Prostate gland (tissue), 2 donors: ENCODE measurements at regions of chr17 and their contacts with region 1.

Region 1: DNA sequence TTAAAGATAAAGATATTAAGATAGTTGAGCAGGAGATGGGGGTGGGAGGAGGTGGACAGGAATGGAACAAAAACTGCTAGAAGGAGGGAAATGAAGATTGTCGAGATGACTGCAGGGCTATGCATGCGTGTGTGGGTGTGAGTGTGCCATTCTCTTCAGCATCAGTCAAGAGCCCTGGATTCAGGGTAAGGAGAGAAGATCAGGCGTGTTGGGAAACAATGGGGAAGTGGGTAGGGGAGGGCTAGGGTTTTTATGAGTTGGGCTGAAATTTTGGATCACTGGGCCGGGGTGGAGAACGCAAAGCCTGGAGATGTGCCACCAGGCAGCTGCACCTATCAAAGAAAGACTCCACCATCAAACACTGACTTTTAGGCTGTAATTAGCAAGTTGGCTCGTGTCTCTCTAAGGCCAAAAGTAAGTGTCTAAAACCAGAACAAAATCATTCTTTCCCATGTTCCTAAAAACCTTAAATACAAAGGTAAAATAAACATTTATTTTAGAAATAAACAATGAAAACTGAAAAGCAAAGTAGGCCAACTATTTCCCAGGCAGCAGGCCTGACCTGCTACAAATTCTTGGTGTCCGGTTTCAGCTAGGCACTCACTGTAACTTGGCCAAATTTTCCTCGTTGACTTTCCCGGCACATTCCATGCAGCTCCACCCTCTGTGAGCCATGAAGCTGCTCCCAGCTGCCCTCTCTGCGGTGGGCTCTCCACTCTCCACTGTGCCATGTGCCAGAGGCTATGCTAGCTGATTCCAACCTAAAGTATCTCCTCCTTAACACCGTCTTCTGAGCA is 4.2 kb downstream of the CDRT4 start:
- DNase-seq: no peak
- H3K4me3 ChIP-seq: no peak overlapping the region
- H3K27ac ChIP-seq: peak overlapping the region in 1 of 2 donors; percentile 23
- H3K4me1 ChIP-seq: no peaks in the 10 kb centered on the region
- H3K27me3 ChIP-seq: no peaks in the 10 kb centered on the region
- CTCF ChIP-seq: no peak
- POLR2A ChIP-seq: no peak

Region 2: DNA sequence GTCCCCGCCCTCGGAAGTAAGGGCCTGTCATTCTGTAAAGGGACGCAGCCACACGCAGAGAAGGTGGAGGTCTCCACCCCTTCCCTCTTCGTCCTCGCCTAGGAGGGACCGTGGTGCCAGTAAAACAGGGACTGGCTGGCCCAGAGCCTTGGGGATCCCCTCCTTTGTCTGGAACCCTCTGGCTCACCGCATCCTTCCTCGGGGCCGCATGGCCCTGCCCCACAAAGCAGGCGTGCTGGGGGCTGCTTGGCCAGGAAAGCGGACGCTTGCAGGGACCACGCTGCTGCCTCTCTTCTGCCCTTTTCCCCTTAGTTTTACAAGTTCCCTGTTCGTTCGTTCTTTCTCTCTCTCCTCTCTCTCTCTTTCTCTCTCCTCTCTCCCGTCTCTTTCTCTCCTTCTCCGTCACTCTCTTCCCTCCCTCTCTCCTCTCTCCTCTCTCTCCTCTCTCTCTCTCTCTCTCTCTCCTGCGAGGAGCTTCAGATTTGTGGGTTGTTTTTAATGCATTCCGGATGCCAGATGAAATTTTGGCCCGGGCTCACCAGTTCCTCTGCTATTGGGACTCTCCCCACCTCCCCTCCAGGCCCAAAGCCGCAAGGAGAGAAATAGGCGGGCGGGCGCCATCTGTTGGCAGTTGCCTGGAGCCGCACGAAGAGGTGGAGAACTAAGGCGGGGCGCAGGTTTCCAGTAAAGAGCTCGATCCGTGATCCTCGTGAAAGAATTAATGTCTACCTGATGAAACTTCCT is 39.4 kb after region 1 on chr17:
- intact Hi-C with region 1: loop called (anchors 2 kb)
- DNase-seq: peak; percentile 84
- H3K4me3 ChIP-seq: peak overlapping the region in 1 of 2 donors; percentile 2
- H3K27ac ChIP-seq: peak overlapping the region; percentile 28 to 47
- H3K4me1 ChIP-seq: no peaks in the 10 kb centered on the region
- H3K27me3 ChIP-seq: no peaks in the 10 kb centered on the region
- CTCF ChIP-seq: peak; percentile 63 to 87 (median 76)
- POLR2A ChIP-seq: peak; percentile 6

Region 3: GRCh38 chr17:17356149-17356930 is 1893.2 kb after region 1 on chr17:
- intact Hi-C with region 1: no loop called
- DNase-seq: peak; percentile 76
- H3K4me3 ChIP-seq: no peak overlapping the region
- H3K27ac ChIP-seq: no peak overlapping the region
- H3K4me1 ChIP-seq: no peaks in the 10 kb centered on the region
- H3K27me3 ChIP-seq: no peaks in the 10 kb centered on the region
- CTCF ChIP-seq: peak; percentile 94 to 100 (median 98)
- POLR2A ChIP-seq: no peak